ENCODE measurements at regions of chr19 and their contacts with region 1.

Region 1: GRCh38 chr19:3557461-3558248 is at the start of gene MFSD12:
- DNase-seq: peak; percentile 83 to 88
- H3K4me3 ChIP-seq: peak within 1 kb of the TSS; percentile 63
- H3K27ac ChIP-seq: peak within 1 kb of the TSS; percentile 74
- H3K4me1 ChIP-seq: peaks cover 21% of the 10 kb centered on the region; the same call in 1 of the 2 replicates
- H3K27me3 ChIP-seq: no peaks in the 10 kb centered on the region
- CTCF ChIP-seq: no peak
- total RNA-seq, gene MFSD12: 62.0 and 70.0 TPM in 2 replicates

Region 2: DNA sequence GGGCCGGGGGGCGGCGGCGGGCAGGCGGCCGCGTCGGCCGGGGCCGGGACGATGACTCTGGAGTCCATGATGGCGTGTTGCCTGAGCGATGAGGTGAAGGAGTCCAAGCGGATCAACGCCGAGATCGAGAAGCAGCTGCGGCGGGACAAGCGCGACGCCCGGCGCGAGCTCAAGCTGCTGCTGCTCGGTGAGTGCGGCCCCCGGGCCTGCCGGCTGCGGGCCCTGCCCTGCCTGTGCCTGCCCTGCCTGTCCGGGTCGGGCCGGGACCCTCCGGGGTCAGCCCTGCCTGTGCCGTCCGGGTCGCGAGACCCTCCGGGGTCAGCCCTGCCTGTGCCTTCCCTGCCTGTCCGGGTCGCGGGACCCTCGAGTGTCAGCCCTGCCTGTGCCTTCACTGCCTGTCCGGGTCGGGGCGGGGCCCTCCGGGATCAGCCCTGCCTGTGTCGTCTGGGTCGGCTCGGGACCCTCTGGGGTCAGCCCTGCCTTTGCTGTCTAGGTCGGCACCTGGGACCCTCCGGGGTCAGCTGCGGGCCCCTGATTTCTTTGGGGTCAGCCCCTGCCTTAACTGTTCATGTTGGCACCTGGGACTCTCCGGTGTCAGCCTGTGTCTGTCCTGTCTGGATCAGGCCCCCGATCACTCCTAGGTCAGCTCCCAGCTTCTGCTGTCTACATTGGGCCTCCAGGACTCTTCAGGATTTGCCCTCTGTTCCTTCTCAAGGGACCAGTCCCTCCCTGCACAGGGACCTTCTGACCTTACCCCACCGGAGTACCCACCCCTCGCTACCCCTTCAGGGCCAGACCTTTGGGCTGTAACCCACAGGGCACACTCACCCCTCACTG is 462.8 kb before region 1 on chr19:
- CTCF ChIA-PET with region 1: no interaction called
- POLR2A ChIA-PET with region 1: interaction called, 17 read pairs
- intact Hi-C with region 1: no loop called
- DNase-seq: no peak
- H3K4me3 ChIP-seq: peak overlapping the region; percentile 75
- H3K27ac ChIP-seq: no peak overlapping the region
- H3K4me1 ChIP-seq: no peaks in the 10 kb centered on the region
- H3K27me3 ChIP-seq: no peaks in the 10 kb centered on the region
- CTCF ChIP-seq: no peak

Region 3: DNA sequence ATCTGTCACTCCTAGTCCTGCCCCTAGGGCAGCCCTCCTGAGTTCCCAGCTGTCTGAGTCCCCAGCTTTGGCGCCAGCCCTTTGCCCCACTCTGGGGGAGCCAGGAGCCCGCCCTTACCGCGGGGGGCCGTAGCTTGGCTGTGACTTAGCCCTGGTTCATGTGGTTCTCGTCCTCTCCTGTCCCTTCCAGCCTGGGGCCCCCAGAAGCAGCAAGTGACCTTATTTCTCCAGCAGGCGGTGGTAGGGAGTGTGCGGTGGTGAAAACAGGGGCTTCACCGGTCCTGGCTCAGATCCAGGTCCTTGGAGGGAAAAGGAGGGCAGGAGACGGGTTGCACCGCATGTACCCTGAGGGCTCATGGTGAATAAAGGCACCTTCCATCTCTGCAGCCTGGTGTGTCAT is 35.5 kb after region 1 on chr19:
- CTCF ChIA-PET with region 1: no interaction called
- POLR2A ChIA-PET with region 1: no interaction called
- intact Hi-C with region 1: no loop called
- DNase-seq: no peak
- H3K4me3 ChIP-seq: no peak overlapping the region
- H3K27ac ChIP-seq: no peak overlapping the region
- H3K4me1 ChIP-seq: no peaks in the 10 kb centered on the region
- H3K27me3 ChIP-seq: peaks cover 13% of the 10 kb centered on the region; the same call in 1 of the 2 replicates
- CTCF ChIP-seq: no peak

Region 4: DNA sequence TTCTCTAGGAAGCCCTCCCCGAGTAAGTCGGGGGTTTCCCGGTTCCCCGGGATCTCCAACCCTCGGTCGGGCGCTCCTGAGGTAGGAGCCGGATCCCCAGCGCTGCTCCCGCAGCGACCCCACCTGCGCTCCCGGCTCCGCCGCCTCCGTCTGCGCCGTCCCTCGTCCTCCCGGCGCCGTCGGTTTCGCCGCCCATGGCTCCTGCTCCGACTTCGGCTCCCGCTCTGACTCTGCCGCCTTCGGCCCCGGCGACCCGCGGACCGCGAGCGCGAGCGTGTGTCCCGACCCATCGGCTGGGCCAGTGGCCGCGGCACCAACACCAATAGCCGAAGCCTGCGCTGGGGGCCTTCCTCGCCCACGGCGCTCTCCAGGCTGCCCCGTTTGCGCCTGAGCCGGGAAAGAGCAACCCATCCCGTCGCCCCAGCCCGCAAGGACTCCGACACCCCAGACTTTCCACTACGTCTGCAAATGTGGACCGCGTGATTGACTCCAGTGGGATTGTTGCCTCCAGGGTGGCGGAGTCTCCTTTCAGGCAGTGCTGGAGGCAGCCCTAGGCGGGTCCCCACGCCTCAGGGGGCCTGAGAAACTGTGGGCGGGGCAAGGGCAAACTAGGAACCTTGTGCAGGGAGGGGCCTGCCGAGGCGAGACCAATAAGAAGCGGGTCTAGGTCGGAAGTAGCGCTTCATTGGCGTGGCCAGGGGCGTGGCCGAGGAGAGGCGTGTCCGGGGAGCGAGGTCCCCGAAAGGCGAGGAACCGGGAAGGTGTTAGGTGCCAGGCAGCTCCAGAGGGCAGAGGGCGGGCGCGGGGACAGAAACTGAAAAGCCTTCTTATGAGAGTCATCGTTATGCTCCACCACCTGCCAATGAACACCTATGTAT is 69.1 kb after region 1 on chr19 and contains the start of gene CACTIN:
- CTCF ChIA-PET with region 1: no interaction called
- POLR2A ChIA-PET with region 1: no interaction called
- intact Hi-C with region 1: loop called (anchors 5 kb)
- DNase-seq: peak; percentile 90 to 95
- H3K4me3 ChIP-seq: peak within 1 kb of the TSS; percentile 76
- H3K27ac ChIP-seq: peak within 1 kb of the TSS; percentile 77
- H3K4me1 ChIP-seq: peaks cover 5% of the 10 kb centered on the region; the same call in 1 of the 2 replicates
- H3K27me3 ChIP-seq: no peaks in the 10 kb centered on the region
- CTCF ChIP-seq: no peak
- total RNA-seq, gene CACTIN: 17.2 and 18.6 TPM in 2 replicates

Region 5: DNA sequence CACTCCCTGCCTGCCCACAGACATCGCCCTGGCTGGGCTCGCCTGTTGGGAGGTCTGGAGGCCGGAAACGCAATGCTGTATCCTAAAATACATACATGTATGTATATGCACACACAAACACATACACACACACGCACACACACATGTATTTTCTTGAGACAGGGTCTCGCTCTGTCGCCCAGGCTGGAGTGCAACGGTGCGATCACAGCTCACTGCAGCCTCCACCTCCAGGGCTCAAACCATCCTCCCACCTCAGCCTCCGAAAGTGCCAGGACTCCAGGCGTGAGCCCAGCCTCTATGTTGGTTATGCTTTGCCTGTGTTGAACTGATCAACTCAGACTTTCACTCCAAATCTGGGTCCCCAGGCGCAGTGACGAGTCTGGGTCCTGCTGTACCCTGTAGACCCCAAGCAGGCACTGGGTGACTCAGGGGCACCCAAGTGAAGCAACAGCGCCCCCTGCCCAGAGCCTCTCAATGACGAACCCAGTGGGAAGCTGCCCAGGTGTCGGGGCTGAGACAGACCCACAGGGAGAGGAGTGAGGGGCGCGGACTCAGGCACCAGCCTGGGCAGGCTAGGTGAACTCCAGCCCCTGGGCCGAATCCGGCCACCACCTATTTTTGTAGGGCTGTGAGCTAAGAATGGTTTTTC is 96.3 kb after region 1 on chr19:
- CTCF ChIA-PET with region 1: no interaction called
- POLR2A ChIA-PET with region 1: no interaction called
- intact Hi-C with region 1: no loop called
- DNase-seq: no peak
- H3K4me3 ChIP-seq: no peak overlapping the region
- H3K27ac ChIP-seq: no peak overlapping the region
- H3K4me1 ChIP-seq: no peaks in the 10 kb centered on the region
- H3K27me3 ChIP-seq: no peaks in the 10 kb centered on the region
- CTCF ChIP-seq: peak; percentile 37; the same call in 1 of the 2 replicates

Measured in PC-9 (cell line).